ENCODE measurements at regions of chr3 and their contacts with region 1.

Region 1: DNA sequence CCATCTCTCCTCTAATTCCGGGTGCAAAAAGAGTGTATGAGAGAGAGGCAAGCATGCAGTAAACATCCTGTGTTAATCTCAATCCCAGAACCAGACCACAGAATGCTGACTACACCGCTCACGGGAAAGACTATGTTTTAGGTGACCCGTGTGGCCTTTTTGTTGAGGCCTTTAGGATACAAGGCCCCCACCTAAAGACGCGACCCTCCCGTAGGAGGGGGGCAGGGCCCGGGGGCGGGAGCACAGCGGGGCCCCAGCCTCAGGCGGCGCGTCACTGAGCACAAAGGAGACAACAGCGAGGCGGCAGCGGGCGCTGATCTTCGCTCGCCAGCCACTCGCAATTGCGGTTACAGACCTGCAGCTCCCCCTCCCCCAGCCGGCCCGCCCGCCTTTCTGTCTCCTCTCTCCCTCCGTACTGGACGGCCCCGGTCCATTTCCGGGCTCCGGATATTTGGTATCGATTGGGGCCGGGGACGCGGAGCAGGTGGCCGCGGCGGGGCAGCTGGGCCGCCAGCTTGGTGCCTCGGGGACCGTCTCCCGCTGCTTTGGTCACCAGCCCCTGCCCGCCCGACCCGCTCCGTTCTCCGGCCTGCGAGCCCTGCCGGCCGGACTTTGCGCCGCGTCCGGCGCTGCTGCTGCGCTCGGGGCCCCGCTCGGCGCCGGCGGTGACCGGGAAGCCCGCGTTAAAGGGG is at the start of gene CCDC50:
- DNase-seq: peak; percentile 96
- H3K4me3 ChIP-seq: peak within 1 kb of the TSS; percentile 78 to 99 (median 96)
- H3K27ac ChIP-seq: peak within 1 kb of the TSS; percentile 93 to 98 (median 97)
- H3K4me1 ChIP-seq: peaks cover 22 to 44% (median 42%) of the 10 kb centered on the region in 4 donors
- H3K27me3 ChIP-seq: no peaks in the 10 kb centered on the region
- CTCF ChIP-seq: peak in 1 of 3 experiments; percentile 19
- EP300 ChIP-seq: no peak
- POLR2A ChIP-seq: peak; percentile 30
- total RNA-seq, gene CCDC50: 141 to 192 (median 165) TPM

Region 2: DNA sequence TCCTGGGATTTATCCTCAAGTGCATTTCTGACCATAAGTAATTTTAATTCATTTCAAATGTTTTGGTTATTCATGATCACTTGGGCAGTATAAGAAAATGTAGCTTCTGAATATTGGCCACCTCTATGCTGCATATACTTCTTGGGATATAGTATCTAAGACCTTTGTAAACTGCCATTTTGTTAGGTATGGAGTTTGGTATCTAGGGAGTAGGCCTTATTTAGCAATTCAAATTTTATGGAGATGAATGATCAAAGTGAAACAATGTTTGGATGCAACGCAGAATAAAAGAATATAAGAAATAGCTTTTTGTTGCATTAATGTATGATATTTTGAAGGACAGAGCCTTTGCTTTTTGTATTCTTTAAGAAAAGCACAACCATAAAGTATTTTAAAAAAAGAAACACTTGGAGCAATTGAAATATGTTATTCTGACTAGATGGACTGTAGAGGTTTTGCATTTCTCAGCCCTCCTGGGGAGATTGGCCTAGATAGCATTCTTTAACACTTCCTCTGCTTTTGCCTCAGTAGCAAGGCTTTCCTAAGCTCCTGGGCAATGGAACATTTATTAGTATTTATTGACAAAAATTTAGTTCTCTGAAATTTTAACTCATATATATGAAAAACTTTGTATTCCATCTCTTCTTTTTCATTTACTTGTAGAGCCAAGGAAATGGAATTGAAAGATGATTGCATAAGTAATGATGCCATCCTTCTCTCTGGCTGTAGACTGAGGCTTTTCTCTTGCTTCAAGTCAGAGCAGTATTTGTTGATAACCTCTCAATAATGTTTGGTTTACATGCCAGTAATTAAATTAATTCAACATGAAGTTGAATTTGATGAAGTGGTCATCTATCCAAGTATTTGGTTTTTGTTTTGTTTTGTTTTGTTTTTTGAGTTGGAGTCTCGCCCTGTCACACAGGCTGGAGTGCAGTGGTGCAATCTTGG is 63.0 kb after region 1 on chr3:
- intact Hi-C with region 1: loop called (anchors 10 kb)
- DNase-seq: no peak
- H3K4me3 ChIP-seq: no peak overlapping the region
- H3K27ac ChIP-seq: no peak overlapping the region
- H3K4me1 ChIP-seq: peaks cover 0 to 15% (median 9%) of the 10 kb centered on the region in 4 donors
- H3K27me3 ChIP-seq: no peaks in the 10 kb centered on the region
- CTCF ChIP-seq: no peak
- EP300 ChIP-seq: no peak
- POLR2A ChIP-seq: no peak